ENCODE measurements at regions of chr6 and their contacts with region 1.

Region 1: GRCh38 chr6:157158897-157159296 is 164.4 kb downstream of the TMEM242 start:
- DNase-seq: no peak
- H3K4me3 ChIP-seq: no peak overlapping the region
- H3K27ac ChIP-seq: no peak overlapping the region
- H3K4me1 ChIP-seq: no peaks in the 10 kb centered on the region
- H3K27me3 ChIP-seq: no peaks in the 10 kb centered on the region
- CTCF ChIP-seq: no peak
- POLR2A ChIP-seq: no peak

Region 2: GRCh38 chr6:155747491-155747890 is 1411.4 kb before region 1 on chr6:
- intact Hi-C with region 1: loop called (anchors 5 kb)
- DNase-seq: no peak
- H3K4me3 ChIP-seq: no peak overlapping the region
- H3K27ac ChIP-seq: no peak overlapping the region
- H3K4me1 ChIP-seq: no peaks in the 10 kb centered on the region
- H3K27me3 ChIP-seq: no peaks in the 10 kb centered on the region
- CTCF ChIP-seq: no peak
- POLR2A ChIP-seq: no peak

Region 3: DNA sequence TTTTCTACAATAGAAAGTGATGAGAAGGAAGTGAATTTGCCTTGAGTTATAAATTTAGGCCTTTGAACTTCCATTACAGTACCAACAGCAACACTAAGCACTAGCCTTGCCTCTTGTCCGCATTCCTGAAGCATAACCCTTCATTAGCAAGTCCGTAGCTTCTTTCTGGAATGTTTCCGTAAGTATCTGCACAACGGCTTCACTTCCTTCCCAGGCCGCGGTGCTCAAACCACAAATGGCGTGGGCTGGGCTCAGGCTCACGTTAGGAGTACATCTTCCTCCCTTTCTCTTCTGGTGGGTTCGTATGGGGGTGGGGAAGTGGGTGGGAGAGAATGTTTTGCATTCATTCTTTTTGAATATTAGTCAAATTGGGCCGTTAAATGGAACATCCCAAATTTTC is 470.3 kb after region 1 on chr6:
- intact Hi-C with region 1: no loop called
- DNase-seq: no peak
- H3K4me3 ChIP-seq: no peak overlapping the region
- H3K27ac ChIP-seq: no peak overlapping the region
- H3K4me1 ChIP-seq: no peaks in the 10 kb centered on the region
- H3K27me3 ChIP-seq: no peaks in the 10 kb centered on the region
- CTCF ChIP-seq: no peak
- POLR2A ChIP-seq: no peak

Region 4: DNA sequence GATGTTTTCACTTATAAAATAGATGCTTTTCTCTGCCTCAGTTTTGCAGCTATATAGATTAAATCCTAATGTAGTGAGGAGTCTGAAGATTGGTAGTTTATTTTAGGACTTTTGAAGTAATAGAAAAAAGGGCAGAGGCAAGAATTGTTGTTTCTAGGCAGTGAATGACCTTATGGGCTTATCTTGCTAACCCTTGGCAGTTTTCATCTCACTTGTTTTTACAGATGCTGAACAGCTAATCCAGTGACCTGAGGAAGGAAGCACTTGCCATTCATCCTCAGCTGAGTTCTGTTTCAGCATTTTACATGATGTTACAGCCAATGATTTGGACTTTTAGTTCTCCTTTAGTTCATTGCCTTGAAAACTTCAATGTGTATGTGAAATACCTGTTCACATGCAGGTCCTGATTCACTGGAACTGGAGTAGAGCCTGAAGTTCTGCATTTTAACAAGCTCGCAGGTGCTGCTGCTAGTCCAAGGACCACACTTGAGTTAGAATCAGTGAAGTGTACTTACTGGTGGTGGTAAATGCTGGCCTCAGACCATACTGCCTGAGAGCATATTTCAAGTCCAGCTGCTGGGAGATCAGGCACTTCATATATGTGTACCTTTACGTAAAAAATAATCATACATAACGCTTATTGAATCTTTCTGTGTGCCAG is 1240.3 kb after region 1 on chr6:
- intact Hi-C with region 1: no loop called
- DNase-seq: no peak
- H3K4me3 ChIP-seq: no peak overlapping the region
- H3K27ac ChIP-seq: no peak overlapping the region
- H3K4me1 ChIP-seq: no peaks in the 10 kb centered on the region
- H3K27me3 ChIP-seq: no peaks in the 10 kb centered on the region
- CTCF ChIP-seq: no peak
- POLR2A ChIP-seq: no peak

Measured in breast epithelium (tissue), 4 donors.